ENCODE measurements at regions of chr3 and their contacts with region 1.

Region 1: GRCh38 chr3:9792405-9793160 is at the starts of genes ARPC4 and TADA3:
- DNase-seq: peak; percentile 90
- H3K4me3 Mint-ChIP-seq: peak within 1 kb of the TSS; percentile 99
- H3K27ac Mint-ChIP-seq: peak within 1 kb of the TSS; percentile 98
- H3K4me1 Mint-ChIP-seq: peaks cover 55% of the 10 kb centered on the region
- H3K27me3 Mint-ChIP-seq: no peaks in the 10 kb centered on the region
- total RNA-seq, gene ARPC4: 253 and 268 TPM in 2 replicates
- total RNA-seq, gene TADA3: 86.6 and 89.2 TPM in 2 replicates

Region 2: DNA sequence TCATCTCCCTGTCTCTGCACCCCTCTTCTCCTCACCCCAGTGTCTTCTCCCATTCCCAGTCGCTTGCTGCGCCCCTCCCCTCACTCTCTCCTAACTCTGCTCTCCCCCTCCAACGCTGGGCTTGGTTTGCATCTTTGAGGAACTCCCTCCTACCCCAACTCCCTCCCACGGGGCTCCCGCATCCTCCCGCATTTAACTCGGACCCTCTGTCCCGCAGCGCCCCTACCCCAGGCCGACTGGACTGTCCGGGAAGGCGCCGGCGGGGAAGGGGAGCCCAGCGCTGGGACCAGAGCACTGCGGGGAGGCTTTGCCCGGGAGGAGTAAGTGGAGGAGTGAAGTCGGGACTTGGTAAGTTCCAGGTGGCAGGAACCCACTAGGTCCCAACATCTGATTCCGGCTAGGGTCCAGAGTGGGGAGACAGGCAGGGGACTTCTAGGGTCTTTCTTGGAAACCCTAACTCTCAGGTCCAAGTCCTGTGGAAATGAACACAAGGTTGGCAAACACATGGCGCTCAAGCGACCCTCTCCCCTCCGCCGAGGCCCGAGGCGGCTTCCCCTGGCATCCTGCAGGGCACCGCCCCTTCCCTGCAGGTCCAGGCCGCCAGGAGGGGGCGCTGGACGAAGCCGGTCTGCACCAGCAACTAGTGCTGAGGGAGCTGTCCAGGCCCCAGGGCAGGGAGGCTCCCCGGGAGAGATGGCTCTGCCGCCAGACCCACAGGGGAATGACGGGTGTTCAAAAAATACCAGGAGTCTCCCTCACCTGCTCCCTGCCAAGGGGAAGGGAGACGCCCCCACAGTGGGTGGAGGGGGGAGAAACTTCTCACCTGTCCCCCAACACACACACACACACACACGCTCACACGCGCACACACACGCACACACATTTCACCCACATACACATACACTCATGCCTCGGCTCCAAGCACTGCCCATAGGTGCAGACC is 292.2 kb before region 1 on chr3:
- intact Hi-C with region 1: no loop called
- DNase-seq: peak; percentile 62
- H3K4me3 Mint-ChIP-seq: no peak overlapping the region
- H3K27ac Mint-ChIP-seq: no peak overlapping the region
- H3K4me1 Mint-ChIP-seq: peaks cover 2% of the 10 kb centered on the region
- H3K27me3 Mint-ChIP-seq: peaks cover 17% of the 10 kb centered on the region

Region 3: DNA sequence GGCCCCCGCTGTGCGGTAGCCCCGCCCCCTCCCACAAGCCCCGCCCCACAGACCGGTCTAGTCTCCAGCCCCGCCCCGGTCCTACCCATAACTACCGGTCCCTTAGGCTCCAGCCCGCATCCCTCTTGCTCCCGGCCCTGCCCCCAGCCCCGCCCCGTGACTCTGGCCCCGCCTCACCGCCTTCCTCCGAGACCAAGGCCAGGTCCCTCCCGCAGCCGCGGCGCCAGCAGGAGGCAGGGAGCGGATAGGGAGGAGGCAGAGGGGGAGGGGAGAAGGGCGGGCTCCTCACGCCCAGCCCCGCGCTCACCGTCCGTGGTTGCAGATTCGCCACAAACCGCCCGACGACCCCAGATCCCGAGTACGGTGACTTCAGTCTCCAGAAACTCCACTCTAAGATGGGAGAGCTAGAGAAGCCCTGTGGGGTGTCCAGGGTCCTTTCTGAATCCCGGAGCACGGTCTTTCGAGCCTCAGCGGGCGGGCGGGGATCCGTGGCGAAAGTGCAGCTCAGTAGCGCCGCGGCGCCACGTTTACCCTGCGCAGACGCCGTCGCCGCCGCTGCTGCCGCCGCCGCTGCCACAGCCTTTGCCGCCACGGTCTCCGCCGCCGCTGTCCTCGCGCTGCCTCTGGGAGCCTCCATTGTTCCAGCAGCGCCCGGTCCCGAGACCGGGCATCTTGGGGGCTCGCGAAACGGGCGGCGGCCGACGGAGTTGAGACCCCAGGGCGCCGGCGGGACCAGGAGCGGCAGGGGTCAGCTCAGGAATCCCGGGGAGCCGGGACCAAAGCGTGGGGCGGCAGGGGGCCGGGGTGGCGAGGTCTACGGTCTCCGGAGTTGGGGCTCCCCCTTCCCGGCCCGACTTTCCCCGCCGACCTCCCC is 61.1 kb before region 1 on chr3 and contains the start of gene BRPF1:
- intact Hi-C with region 1: loop called (anchors 1 kb)
- DNase-seq: peak; percentile 96
- H3K4me3 Mint-ChIP-seq: peak within 1 kb of the TSS; percentile 96
- H3K27ac Mint-ChIP-seq: peak within 1 kb of the TSS; percentile 90
- H3K4me1 Mint-ChIP-seq: peaks cover 57% of the 10 kb centered on the region
- H3K27me3 Mint-ChIP-seq: no peaks in the 10 kb centered on the region
- total RNA-seq, gene BRPF1: 34.2 and 35.8 TPM in 2 replicates

Region 4: DNA sequence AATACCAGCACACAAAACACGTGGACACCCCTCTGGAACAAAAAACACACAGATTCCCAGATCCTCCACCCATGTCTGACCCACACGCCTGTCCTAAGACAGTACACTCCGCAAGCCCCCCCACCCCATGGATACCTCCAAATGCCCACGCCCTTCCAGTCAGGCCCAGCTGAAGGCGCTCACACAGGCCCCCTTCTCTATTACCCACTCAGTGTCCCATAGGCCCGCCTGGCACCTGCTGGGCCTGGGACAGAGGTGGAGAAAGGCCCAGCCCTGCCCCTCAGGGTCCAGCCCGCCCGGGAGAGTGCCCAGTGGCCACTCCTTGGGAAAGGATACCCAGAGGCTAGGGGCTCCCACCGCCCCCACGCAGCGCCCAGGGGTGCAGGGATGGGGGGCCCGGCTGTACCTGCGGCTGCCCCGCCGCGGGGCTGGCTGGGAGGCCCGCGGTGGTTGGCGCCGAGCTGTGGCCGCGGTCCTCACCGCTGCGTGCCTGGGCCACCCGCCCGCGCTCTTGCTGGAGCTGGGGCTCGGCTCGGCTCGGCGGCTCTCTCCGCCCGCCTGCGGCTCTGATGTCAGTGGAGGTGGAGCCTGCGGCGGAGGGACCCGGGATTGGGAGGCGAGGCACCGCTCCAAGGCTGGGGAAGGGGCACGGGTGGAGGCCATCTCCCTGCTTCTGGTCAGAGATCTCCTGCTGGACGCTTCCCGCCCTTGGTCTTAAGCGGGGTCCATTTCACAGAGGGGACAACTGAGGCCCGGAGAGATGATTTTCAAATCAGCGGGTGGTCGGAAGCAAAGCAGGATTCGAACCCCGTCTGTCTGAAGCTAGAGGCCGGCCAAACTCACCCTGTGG is 22.9 kb before region 1 on chr3 and contains the start of gene CAMK1:
- intact Hi-C with region 1: loop called (anchors 1 kb)
- DNase-seq: peak; percentile 70
- H3K4me3 Mint-ChIP-seq: peak within 1 kb of the TSS; percentile 82
- H3K27ac Mint-ChIP-seq: peak within 1 kb of the TSS; percentile 65
- H3K4me1 Mint-ChIP-seq: peaks cover 36% of the 10 kb centered on the region
- H3K27me3 Mint-ChIP-seq: no peaks in the 10 kb centered on the region
- total RNA-seq, gene CAMK1: 113 and 116 TPM in 2 replicates

Region 5: GRCh38 chr3:9843715-9844438 is 51.3 kb after region 1 on chr3 and contains the start of gene RPUSD3:
- intact Hi-C with region 1: loop called (anchors 2 kb)
- DNase-seq: peak; percentile 94
- H3K4me3 Mint-ChIP-seq: peak within 1 kb of the TSS; percentile 98
- H3K27ac Mint-ChIP-seq: peak within 1 kb of the TSS; percentile 94
- H3K4me1 Mint-ChIP-seq: peaks cover 16% of the 10 kb centered on the region
- H3K27me3 Mint-ChIP-seq: no peaks in the 10 kb centered on the region
- total RNA-seq, gene RPUSD3: 70.0 and 71.1 TPM in 2 replicates

Measured in activated T-helper 2 cell treated with anti-CD3 and anti-CD28 coated beads, Interferon-gamma antibody, Interleukin-2, Interleukin-4, amounts not matched to agents 10 μg/mL and 5 μg/mL and 100 μg/mL, durations not matched to agents 14 hours and 24 hours and 36 hours (primary cell).